ENCODE measurements at regions of chr7 and their contacts with region 1.

Region 1: GRCh38 chr7:13724977-13725566 is 264.4 kb downstream of the ETV1 start:
- DNase-seq: no peak
- H3K4me3 ChIP-seq: no peak overlapping the region
- H3K27ac ChIP-seq: no peak overlapping the region
- H3K4me1 ChIP-seq: no peaks in the 10 kb centered on the region
- H3K27me3 ChIP-seq: no peaks in the 10 kb centered on the region
- CTCF ChIP-seq: no peak

Region 2: DNA sequence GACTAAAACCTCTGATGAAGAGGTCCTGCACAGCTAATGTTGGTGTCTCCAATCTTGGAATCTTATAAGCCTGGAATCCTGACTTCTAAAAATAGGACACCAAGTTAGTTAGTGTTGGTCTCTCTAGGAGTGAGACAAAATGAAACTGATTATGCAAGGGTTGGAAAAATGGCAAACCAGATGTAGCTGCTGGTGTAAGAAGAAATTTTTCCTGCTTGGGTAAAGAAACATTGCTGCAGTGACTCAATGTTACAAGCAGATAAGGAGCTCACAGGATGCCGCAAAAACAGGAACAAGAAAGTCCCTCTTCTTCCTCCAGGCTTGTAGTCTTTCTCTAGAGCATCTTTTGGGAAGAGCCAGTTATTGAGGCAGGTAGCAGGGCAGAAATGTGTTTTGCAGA is 184.6 kb before region 1 on chr7:
- dilution Hi-C with region 1: loop called (anchors 25 kb)
- DNase-seq: no peak
- H3K4me3 ChIP-seq: no peak overlapping the region
- H3K27ac ChIP-seq: no peak overlapping the region
- H3K4me1 ChIP-seq: no peaks in the 10 kb centered on the region
- H3K27me3 ChIP-seq: no peaks in the 10 kb centered on the region
- CTCF ChIP-seq: no peak

Measured in keratinocyte (primary cell).